PC-9 (cell line): ENCODE measurements at regions of chr1 and their contacts with region 1.

Region 1: GRCh38 chr1:237367758-237368157 is 325.8 kb downstream of the RYR2 start:
- DNase-seq: no peak
- H3K4me3 ChIP-seq: no peak overlapping the region
- H3K27ac ChIP-seq: no peak overlapping the region
- H3K4me1 ChIP-seq: no peaks in the 10 kb centered on the region
- H3K27me3 ChIP-seq: peaks cover 5% of the 10 kb centered on the region; the same call in 1 of the 2 replicates
- CTCF ChIP-seq: no peak

Region 2: DNA sequence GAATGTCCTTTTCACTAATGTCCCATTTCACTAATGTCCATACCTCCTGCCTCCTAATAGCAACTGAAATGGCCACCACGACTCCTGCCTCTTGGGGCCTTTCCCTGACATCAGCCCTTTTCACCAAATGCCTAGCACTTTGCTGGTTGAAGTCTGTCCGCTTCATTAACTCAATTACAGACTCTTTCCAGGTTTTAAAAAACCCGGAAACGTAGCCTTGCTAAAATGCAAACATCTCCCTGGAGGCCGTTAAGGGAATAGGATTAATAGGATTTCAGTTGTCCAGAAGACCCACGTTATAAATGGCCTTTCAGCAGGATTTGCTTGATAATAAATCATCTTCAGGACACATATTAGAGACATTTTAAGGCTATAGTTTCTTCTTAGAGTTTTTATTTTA is 1060.3 kb before region 1 on chr1:
- CTCF ChIA-PET with region 1: no interaction called
- POLR2A ChIA-PET with region 1: no interaction called
- intact Hi-C with region 1: loop called (anchors 5 kb)
- DNase-seq: no peak
- H3K4me3 ChIP-seq: no peak overlapping the region
- H3K27ac ChIP-seq: no peak overlapping the region
- H3K4me1 ChIP-seq: no peaks in the 10 kb centered on the region
- H3K27me3 ChIP-seq: no peaks in the 10 kb centered on the region
- CTCF ChIP-seq: no peak

Region 3: GRCh38 chr1:237873487-237874211 is 505.9 kb after region 1 on chr1:
- CTCF ChIA-PET with region 1: no interaction called
- POLR2A ChIA-PET with region 1: no interaction called
- intact Hi-C with region 1: no loop called
- DNase-seq: peak; percentile 9 to 72
- H3K4me3 ChIP-seq: no peak overlapping the region
- H3K27ac ChIP-seq: no peak overlapping the region
- H3K4me1 ChIP-seq: no peaks in the 10 kb centered on the region
- H3K27me3 ChIP-seq: no peaks in the 10 kb centered on the region
- CTCF ChIP-seq: no peak